CD8-positive, alpha-beta T cell (primary cell): ENCODE measurements at regions of chr1 and their contacts with region 1.

Region 1: DNA sequence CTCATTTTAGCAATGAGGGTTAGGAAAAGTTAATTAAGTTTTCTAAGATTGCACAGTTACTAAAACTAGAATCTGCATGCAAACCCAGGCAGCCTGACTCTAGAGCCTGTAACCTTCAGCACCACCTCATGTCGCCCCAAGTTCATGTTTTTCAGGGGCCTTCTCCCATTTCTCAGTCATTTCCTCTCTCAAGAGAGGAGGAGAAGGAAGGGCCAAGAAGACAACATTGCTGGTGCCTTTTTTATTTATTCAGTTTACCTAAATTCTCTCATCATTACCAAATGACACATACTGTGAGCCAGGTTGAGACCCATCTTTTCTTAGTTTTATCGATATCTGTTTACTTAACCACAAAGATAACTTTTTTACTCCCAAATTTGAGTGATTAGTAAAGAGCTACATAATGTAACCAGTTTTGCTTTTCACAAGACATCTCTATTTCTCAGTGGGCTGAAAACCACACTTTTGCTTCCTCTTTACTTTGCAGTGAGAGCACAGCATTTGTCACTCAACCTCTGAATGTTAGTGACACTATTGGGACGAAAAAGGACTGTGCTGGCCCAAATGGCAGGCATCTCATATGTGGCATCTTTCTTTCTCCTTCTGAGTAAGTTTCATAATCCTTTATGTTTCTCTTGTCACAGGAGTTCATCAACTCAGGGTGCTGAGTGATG is at the start of gene CD101:
- DNase-seq: peak in 2 of 9 experiments; percentile 38 to 43
- ATAC-seq: peak; percentile 65
- H3K4me3 ChIP-seq: no peak within 1 kb of the TSS
- H3K4me3 Mint-ChIP-seq: peak within 1 kb of the TSS; percentile 72
- H3K27ac ChIP-seq: peak within 1 kb of the TSS; percentile 2 to 40
- H3K27ac Mint-ChIP-seq: peak within 1 kb of the TSS; percentile 88
- H3K4me1 ChIP-seq: peaks cover 56% of the 10 kb centered on the region
- H3K4me1 Mint-ChIP-seq: peaks cover 63% of the 10 kb centered on the region
- H3K27me3 ChIP-seq: no peaks in the 10 kb centered on the region
- H3K27me3 Mint-ChIP-seq: no peaks in the 10 kb centered on the region
- CTCF ChIP-seq: no peak
- total RNA-seq, gene CD101: 3.7 to 4.4 TPM

Region 2: DNA sequence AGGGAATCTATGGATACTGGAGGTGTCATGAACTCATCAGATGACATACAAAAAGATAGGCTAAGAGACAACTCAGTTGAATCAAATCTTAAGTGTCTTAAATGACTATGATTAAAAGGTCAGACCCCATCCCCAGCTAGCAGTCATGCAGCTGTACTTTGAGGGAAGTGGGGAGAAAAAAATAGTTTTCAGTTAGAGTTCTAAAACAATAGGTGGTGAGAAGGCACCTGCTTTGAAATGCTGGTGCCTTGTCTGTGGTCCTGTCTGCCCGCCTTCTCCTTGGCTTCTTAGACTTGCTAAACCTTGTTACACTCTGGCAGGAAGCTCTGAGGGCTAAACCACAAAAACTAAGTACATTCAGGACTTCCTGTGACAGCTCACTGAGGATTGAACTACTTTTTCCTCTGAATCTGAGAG is 231.8 kb before region 1 on chr1:
- CTCF ChIA-PET with region 1: no interaction called
- POLR2A ChIA-PET with region 1: interaction called, 4 read pairs
- intact Hi-C with region 1: loop called (anchors 5 kb)
- DNase-seq: peak in 8 of 9 experiments; percentile 44 to 94 (median 76)
- ATAC-seq: peak; percentile 75
- H3K4me3 ChIP-seq: peak overlapping the region in 1 of 2 experiments; percentile 14
- H3K4me3 Mint-ChIP-seq: peak overlapping the region; percentile 55
- H3K27ac ChIP-seq: peak overlapping the region; percentile 42 to 87
- H3K27ac Mint-ChIP-seq: peak overlapping the region; percentile 96
- H3K4me1 ChIP-seq: peaks cover 83% of the 10 kb centered on the region
- H3K4me1 Mint-ChIP-seq: peaks cover 86% of the 10 kb centered on the region
- H3K27me3 ChIP-seq: no peaks in the 10 kb centered on the region
- H3K27me3 Mint-ChIP-seq: no peaks in the 10 kb centered on the region
- CTCF ChIP-seq: no peak

Region 3: GRCh38 chr1:116987256-116987555 is 14.2 kb before region 1 on chr1:
- CTCF ChIA-PET with region 1: interaction called, 3 read pairs
- POLR2A ChIA-PET with region 1: interaction called, 15 read pairs
- intact Hi-C with region 1: loop called in 1 of 2 experiments (anchors 2 kb)
- DNase-seq: peak; percentile 43 to 83 (median 74)
- ATAC-seq: peak; percentile 91
- H3K4me3 ChIP-seq: peak overlapping the region; percentile 29 to 53
- H3K4me3 Mint-ChIP-seq: peak overlapping the region; percentile 85
- H3K27ac ChIP-seq: peak overlapping the region; percentile 49 to 85
- H3K27ac Mint-ChIP-seq: peak overlapping the region; percentile 98
- H3K4me1 ChIP-seq: peaks cover 52% of the 10 kb centered on the region
- H3K4me1 Mint-ChIP-seq: peaks cover 69% of the 10 kb centered on the region
- H3K27me3 ChIP-seq: no peaks in the 10 kb centered on the region
- H3K27me3 Mint-ChIP-seq: no peaks in the 10 kb centered on the region
- CTCF ChIP-seq: no peak

Region 4: GRCh38 chr1:117014209-117014608 is 12.8 kb after region 1 on chr1:
- CTCF ChIA-PET with region 1: no interaction called
- POLR2A ChIA-PET with region 1: interaction called, 4 read pairs
- intact Hi-C with region 1: loop called in 1 of 2 experiments (anchors 2 kb)
- DNase-seq: no peak
- ATAC-seq: no peak
- H3K4me3 ChIP-seq: no peak overlapping the region
- H3K4me3 Mint-ChIP-seq: no peak overlapping the region
- H3K27ac ChIP-seq: no peak overlapping the region
- H3K27ac Mint-ChIP-seq: no peak overlapping the region
- H3K4me1 ChIP-seq: peaks cover 12% of the 10 kb centered on the region
- H3K4me1 Mint-ChIP-seq: peaks cover 47% of the 10 kb centered on the region
- H3K27me3 ChIP-seq: no peaks in the 10 kb centered on the region
- H3K27me3 Mint-ChIP-seq: no peaks in the 10 kb centered on the region
- CTCF ChIP-seq: no peak

Region 5: DNA sequence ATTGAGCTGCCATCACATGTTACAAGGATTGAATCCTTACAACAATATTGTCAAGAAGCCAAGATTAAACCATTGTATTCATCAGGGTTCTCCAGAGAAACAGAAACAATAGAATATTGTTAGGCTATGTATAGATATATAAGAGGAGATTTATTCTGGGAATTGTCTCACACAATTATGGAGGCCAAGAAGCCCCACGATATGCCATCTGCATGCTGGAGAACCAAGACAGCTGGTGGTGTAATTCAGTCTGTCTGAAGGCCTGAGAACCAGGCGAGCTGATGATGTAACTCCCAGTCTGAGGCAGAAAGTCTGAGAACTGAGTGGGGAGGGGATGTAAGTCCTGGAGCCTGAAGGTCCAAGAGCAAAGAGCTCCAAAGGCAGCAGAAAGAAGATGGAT is 44.3 kb after region 1 on chr1:
- CTCF ChIA-PET with region 1: no interaction called
- POLR2A ChIA-PET with region 1: no interaction called
- intact Hi-C with region 1: loop called (anchors 2 kb)
- DNase-seq: no peak
- ATAC-seq: no peak
- H3K4me3 ChIP-seq: no peak overlapping the region
- H3K4me3 Mint-ChIP-seq: no peak overlapping the region
- H3K27ac ChIP-seq: no peak overlapping the region
- H3K27ac Mint-ChIP-seq: no peak overlapping the region
- H3K4me1 ChIP-seq: peaks cover 32% of the 10 kb centered on the region
- H3K4me1 Mint-ChIP-seq: peaks cover 38% of the 10 kb centered on the region
- H3K27me3 ChIP-seq: no peaks in the 10 kb centered on the region
- H3K27me3 Mint-ChIP-seq: no peaks in the 10 kb centered on the region
- CTCF ChIP-seq: no peak

Region 6: DNA sequence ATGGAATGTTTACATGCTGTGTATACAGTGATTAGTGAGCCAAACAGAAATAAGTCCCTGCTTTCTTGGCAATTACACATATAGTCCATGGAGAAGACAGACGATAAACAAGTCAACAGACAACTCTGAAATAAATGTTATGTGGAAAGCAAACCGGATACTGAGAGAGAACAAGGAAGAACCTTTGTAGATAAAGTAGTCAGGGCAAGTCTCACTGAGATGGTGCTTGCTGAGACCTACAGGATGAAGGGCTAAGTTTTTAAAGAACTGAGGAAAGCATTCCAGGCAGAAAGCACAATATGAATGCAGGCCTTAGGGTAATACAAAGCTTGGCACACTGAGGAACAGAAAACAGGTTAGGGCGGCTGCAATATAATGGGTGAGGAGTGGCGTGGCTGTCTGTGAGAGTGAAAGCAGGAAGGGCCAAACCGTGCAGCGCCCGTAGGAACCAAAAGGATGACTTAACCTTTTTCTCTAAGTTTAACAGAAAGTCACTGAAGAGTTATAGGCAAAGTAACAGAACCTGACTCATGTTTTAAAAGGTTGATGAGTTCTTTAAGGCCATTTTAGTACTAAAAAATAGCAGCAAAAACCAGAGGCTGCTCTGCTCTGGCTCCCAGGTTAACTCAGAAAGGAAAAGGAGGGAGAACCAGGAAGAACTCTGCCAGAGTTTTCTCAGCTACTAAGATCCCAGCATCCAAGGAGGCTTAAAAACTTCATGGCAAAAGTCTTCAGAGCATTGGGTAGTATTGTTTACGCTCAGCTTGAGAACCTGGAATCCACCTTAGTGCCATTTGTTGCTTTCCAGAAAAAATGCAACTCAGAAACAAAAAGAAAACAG is 50.1 kb after region 1 on chr1:
- CTCF ChIA-PET with region 1: interaction called, 3 read pairs
- POLR2A ChIA-PET with region 1: no interaction called
- intact Hi-C with region 1: loop called (anchors 2 kb)
- DNase-seq: peak in 6 of 9 experiments; percentile 18 to 63 (median 34)
- ATAC-seq: peak; percentile 13
- H3K4me3 ChIP-seq: peak overlapping the region; percentile 7 to 23
- H3K4me3 Mint-ChIP-seq: peak overlapping the region; percentile 72
- H3K27ac ChIP-seq: peak overlapping the region in 1 of 2 experiments; percentile 52
- H3K27ac Mint-ChIP-seq: peak overlapping the region; percentile 87
- H3K4me1 ChIP-seq: peaks cover 49% of the 10 kb centered on the region
- H3K4me1 Mint-ChIP-seq: peaks cover 68% of the 10 kb centered on the region
- H3K27me3 ChIP-seq: no peaks in the 10 kb centered on the region
- H3K27me3 Mint-ChIP-seq: no peaks in the 10 kb centered on the region
- CTCF ChIP-seq: no peak

Region 7: GRCh38 chr1:117121776-117122697 is 120.6 kb after region 1 on chr1:
- CTCF ChIA-PET with region 1: no interaction called
- POLR2A ChIA-PET with region 1: no interaction called
- intact Hi-C with region 1: loop called in 1 of 2 experiments (anchors 10 kb)
- DNase-seq: peak; percentile 67 to 89 (median 81)
- ATAC-seq: peak; percentile 84
- H3K4me3 ChIP-seq: peak overlapping the region; percentile 56 to 91
- H3K4me3 Mint-ChIP-seq: peak overlapping the region; percentile 84
- H3K27ac ChIP-seq: no peak overlapping the region
- H3K27ac Mint-ChIP-seq: no peak overlapping the region
- H3K4me1 ChIP-seq: peaks cover 10% of the 10 kb centered on the region
- H3K4me1 Mint-ChIP-seq: peaks cover 9% of the 10 kb centered on the region
- H3K27me3 ChIP-seq: peaks cover 0 to 2% of the 10 kb centered on the region in 2 experiments
- H3K27me3 Mint-ChIP-seq: peaks cover 11% of the 10 kb centered on the region
- CTCF ChIP-seq: peak; percentile 69